Activated B cell treated with CpG ODN at 0.5 μM for 24 hours (primary cell): ENCODE measurements at regions of chr16 and their contacts with region 1.

Region 1: GRCh38 chr16:70395345-70395901 is 43.5 kb downstream of the ST3GAL2 start:
- DNase-seq: peak; percentile 66
- ATAC-seq: peak; percentile 89
- H3K4me3 Mint-ChIP-seq: no peak overlapping the region
- H3K27ac Mint-ChIP-seq: no peak overlapping the region
- H3K4me1 Mint-ChIP-seq: peaks cover 5% of the 10 kb centered on the region
- H3K27me3 Mint-ChIP-seq: no peaks in the 10 kb centered on the region
- CTCF ChIP-seq: no peak

Region 2: DNA sequence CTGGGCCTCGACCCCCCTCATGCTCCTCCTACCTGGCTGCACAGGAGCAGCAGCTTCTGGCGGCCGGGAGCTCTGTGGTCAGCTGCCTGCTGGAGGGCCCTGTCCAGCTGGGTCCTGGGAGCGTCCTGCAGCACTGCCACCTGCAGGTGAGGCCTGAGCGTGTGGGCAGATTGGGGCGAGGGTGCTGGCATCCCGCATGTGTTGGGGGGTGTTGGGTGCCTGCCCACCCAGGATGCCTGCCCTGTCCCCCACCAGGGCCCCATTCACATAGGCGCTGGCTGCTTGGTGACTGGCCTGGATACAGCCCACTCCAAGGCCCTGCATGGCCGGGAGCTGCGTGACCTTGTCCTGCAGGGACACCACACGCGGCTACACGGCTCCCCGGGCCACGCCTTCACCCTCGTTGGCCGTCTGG is 75.5 kb after region 1 on chr16:
- CTCF ChIA-PET with region 1: interaction called, 9 read pairs
- POLR2A ChIA-PET with region 1: no interaction called
- intact Hi-C with region 1: loop called (anchors 1 kb)
- DNase-seq: no peak
- ATAC-seq: no peak
- H3K4me3 Mint-ChIP-seq: no peak overlapping the region
- H3K27ac Mint-ChIP-seq: no peak overlapping the region
- H3K4me1 Mint-ChIP-seq: no peaks in the 10 kb centered on the region
- H3K27me3 Mint-ChIP-seq: no peaks in the 10 kb centered on the region
- CTCF ChIP-seq: no peak